IMR-90 (cell line): ENCODE measurements at regions of chr1 and their contacts with region 1.

Region 1: DNA sequence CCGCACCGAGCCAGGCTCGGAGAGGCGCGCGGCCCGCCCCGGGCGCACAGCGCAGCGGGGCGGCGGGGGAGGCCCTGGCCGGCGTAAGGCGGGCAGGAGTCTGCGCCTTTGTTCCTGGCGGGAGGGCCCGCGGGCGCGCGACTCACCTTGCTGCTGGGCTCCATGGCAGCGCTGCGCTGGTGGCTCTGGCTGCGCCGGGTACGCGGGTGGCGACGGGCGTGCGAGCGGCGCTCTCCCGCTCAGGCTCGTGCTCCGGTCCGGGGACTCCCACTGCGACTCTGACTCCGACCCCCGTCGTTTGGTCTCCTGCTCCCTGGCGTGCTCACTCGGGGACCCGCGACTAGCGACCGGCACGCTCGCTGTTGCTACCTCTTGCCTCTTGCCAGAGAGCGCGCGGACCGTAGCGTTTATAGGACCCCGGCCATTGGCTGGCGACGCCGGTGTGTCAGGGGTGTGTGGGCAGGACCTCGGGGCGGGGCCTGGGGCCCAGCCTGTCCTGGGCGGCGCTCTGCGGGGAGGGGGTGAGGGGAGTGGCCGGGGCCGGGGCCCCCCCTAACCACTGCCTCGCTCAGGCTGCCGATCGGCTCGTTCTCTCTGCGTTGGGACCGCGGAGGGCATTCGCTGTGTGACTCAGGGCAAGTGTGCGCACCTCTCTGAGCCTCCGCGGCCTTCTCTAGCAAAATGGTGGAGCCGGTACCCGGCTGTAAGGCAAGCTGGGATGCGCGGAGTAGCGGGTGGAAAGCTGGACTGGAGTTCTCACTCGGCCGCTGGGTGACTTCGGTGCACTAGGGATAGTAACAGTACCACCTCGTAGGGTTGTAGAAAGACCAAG is at the start of gene SLC2A1:
- DNase-seq: peak; percentile 94
- ATAC-seq: peak; percentile 87
- H3K4me3 ChIP-seq: peak within 1 kb of the TSS; percentile 91
- H3K27ac ChIP-seq: peak within 1 kb of the TSS; percentile 89
- H3K4me1 ChIP-seq: peaks cover 41% of the 10 kb centered on the region
- H3K27me3 ChIP-seq: no peaks in the 10 kb centered on the region
- CTCF ChIP-seq: no peak
- POLR2A ChIP-seq: peak; percentile 99
- RAD21 ChIP-seq: no peak
- total RNA-seq, gene SLC2A1: 203 and 395 TPM in 2 replicates

Region 2: DNA sequence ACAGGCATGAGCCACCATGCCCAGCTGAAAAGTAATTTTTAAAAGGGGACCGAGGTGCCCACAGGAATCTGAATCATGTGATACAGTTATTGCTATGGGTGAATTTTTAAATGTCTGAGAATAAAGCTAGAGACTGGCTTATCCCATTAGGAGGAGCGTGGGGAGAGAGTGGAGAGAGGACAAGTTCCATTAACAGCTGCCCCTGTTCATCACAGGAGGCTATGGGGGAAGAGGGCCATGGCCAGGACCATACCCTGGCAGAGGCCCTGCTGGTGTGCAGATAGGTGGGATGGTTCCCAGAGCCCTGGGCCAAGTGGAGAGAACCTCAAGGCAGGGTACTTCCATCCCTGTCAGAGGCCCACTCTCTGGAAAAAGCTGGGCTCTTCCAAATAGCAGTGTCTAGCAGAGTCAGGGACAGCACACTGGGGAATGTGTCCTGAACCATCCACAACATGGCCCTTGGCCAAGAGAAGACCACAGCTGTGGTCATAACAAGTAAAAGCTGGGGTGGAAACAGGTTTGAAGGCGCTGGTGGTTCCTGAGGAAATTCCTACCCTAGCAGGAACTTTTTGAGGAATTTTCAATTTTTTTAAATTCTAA is 126.0 kb before region 1 on chr1:
- CTCF ChIA-PET with region 1: no interaction called
- POLR2A ChIA-PET with region 1: interaction called, 10 read pairs
- dilution Hi-C with region 1: no loop called
- in situ Hi-C with region 1: no loop called
- intact Hi-C with region 1: no loop called
- DNase-seq: no peak
- ATAC-seq: no peak
- H3K4me3 ChIP-seq: no peak overlapping the region
- H3K27ac ChIP-seq: no peak overlapping the region
- H3K4me1 ChIP-seq: no peaks in the 10 kb centered on the region
- H3K27me3 ChIP-seq: no peaks in the 10 kb centered on the region
- CTCF ChIP-seq: no peak
- POLR2A ChIP-seq: no peak
- RAD21 ChIP-seq: no peak

Region 3: DNA sequence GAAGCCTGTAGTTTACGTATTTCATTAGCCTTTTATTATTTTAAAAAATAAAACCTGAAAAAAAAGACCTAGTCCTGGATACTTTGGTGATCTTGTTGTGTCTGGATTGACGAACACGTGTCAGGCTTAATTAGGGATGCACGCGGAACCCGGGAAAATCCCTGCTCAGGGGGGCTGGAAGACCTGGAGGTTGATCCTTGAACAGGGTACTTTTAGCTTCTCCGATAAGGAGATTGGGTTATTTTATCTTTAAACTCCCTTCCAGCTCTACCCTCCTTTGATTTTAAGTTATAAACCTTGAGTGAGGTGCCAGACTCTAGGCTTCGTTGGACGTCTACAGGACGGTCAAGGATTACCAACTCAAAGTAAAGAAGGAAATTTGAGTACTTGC is 112.8 kb before region 1 on chr1:
- CTCF ChIA-PET with region 1: no interaction called
- POLR2A ChIA-PET with region 1: no interaction called
- dilution Hi-C with region 1: no loop called
- in situ Hi-C with region 1: no loop called
- intact Hi-C with region 1: no loop called
- DNase-seq: no peak
- ATAC-seq: peak; percentile 18
- H3K4me3 ChIP-seq: peak overlapping the region; percentile 67
- H3K27ac ChIP-seq: peak overlapping the region; percentile 41
- H3K4me1 ChIP-seq: peaks cover 6% of the 10 kb centered on the region
- H3K27me3 ChIP-seq: no peaks in the 10 kb centered on the region
- CTCF ChIP-seq: no peak
- POLR2A ChIP-seq: no peak
- RAD21 ChIP-seq: no peak

Region 4: DNA sequence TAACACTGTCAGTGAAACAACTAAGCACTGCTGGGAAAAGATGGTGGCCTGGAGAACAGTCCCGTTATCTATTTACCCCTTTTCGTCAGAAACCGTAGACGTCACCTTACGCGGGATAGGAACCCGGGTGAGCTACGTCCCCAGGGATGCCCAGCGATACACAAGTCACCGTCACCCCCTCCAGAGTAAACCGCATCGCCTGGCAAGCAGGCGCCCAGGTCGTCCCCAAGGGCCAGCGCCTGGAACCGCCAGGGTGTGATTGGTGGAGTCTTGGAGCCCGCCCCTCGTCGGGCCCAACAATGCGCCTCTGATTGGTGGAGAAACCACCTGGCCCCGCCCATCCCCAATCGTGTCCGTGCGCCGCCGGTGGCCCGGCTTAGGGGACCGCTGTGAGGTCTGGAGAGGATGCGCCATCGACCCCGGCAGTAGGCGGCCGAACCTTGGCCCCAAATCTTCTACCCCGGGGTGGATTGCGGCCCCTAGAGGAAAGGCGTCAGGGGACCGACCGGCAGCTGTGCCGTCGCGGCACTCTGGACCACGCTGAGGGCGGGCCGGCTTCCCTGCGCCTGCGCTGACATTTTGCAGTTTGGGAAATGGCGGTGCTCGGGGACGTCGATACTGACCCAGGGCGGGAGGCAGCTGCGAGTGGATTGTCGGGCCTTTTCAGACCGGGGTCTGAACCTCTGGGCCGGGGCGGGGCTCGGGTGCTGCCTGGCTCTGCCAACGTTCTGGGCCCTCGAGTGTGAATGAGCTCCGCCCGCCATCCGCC is 34.4 kb before region 1 on chr1:
- CTCF ChIA-PET with region 1: interaction called, 4 read pairs
- POLR2A ChIA-PET with region 1: interaction called, 4 read pairs
- dilution Hi-C with region 1: no loop called
- in situ Hi-C with region 1: no loop called
- intact Hi-C with region 1: loop called (anchors 2 kb)
- DNase-seq: peak; percentile 75
- ATAC-seq: peak; percentile 93
- H3K4me3 ChIP-seq: peak overlapping the region; percentile 67
- H3K27ac ChIP-seq: peak overlapping the region; percentile 72
- H3K4me1 ChIP-seq: peaks cover 3% of the 10 kb centered on the region
- H3K27me3 ChIP-seq: no peaks in the 10 kb centered on the region
- CTCF ChIP-seq: peak; percentile 27; the same call in 1 of the 2 replicates
- POLR2A ChIP-seq: peak; percentile 60
- RAD21 ChIP-seq: no peak

Region 5: DNA sequence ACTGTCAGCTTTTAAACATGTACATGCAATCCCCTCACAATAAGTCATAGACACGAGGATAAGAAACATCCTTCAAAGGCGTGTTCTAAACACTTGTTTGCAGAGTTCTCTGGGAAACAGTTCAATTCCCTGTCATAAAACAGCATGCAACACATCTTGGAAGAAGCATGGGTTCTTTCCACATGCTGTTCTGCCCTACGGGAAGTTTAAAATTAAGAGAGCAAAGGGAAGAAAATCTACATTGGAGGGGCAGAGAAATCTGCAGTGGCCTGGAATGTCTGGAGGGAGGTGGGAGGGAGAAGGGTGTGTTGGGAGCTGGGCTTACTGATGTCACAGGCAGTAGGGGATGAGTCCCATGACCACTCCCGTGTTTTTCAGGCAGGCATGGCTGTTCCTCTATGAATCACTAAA is 98.3 kb after region 1 on chr1:
- CTCF ChIA-PET with region 1: interaction called, 4 read pairs
- POLR2A ChIA-PET with region 1: no interaction called
- dilution Hi-C with region 1: no loop called
- in situ Hi-C with region 1: no loop called
- intact Hi-C with region 1: loop called (anchors 1 kb)
- DNase-seq: peak; percentile 65
- ATAC-seq: peak; percentile 47
- H3K4me3 ChIP-seq: no peak overlapping the region
- H3K27ac ChIP-seq: peak overlapping the region; percentile 87; the same call in 1 of the 2 replicates
- H3K4me1 ChIP-seq: peaks cover 38% of the 10 kb centered on the region
- H3K27me3 ChIP-seq: no peaks in the 10 kb centered on the region
- CTCF ChIP-seq: no peak
- POLR2A ChIP-seq: no peak
- RAD21 ChIP-seq: no peak

Region 6: DNA sequence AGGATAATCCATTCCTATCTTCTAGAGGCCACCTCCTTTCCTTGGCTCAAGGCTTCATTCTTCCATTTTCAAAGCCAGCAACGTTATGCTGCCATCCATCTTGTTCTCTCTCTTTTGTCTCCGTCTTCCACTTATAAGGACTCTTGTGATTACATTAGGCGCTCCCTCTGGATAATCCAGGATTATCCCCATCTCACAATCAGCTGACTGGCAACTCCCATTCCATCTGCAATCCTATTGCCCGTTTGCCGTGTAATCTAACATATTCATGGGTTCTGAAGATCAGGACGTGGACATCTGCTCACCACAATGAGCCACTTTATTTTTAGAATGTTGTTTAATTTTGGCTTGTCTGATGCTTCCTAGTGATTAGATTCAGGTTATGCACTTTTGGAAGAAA is 124.0 kb after region 1 on chr1:
- CTCF ChIA-PET with region 1: no interaction called
- POLR2A ChIA-PET with region 1: interaction called, 11 read pairs
- dilution Hi-C with region 1: no loop called
- in situ Hi-C with region 1: no loop called
- intact Hi-C with region 1: no loop called
- DNase-seq: no peak
- ATAC-seq: no peak
- H3K4me3 ChIP-seq: no peak overlapping the region
- H3K27ac ChIP-seq: no peak overlapping the region
- H3K4me1 ChIP-seq: no peaks in the 10 kb centered on the region
- H3K27me3 ChIP-seq: peaks cover 2% of the 10 kb centered on the region
- CTCF ChIP-seq: no peak
- POLR2A ChIP-seq: no peak
- RAD21 ChIP-seq: no peak